ENCODE measurements at regions of chr2 and their contacts with region 1.

Region 1: DNA sequence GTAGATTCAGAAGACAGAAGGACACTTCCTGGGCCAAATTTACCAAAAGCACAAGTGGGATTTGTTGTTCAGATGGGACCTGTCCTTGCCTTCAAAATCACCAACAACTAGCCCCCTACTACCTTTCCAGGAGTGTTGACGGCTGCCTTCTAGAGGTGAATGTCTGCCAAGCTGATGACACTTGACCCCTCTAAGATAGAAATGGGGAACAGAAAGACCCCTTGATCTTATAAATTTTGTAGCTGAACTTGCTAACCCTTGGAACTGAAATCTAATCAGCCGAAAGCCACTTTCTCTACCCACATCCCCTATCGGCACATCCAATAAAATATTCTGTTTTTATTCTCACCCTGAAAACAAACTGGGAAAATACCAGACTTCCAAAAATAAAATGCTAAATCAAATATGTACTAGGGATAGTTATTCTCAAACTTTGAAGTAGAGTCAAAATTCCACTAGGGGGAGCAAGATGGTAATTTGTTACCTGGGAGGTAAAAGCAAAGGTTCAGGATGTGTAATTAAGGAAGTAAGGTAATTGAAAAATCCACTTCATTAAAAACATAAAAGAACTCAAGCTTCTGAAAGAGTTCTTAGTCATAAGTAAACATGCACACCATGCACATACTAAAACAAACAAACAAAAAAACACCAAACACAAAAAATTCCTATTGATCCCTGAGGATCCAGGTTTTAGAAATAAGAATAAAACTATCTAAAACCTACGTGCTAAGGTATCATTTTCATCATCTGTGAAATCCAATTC is 119.2 kb downstream of the ANKRD44 start:
- DNase-seq: no peak
- ATAC-seq: peak; percentile 40
- H3K4me3 Mint-ChIP-seq: peak overlapping the region; percentile 41
- H3K27ac Mint-ChIP-seq: peak overlapping the region; percentile 78
- H3K4me1 Mint-ChIP-seq: peaks cover 76% of the 10 kb centered on the region
- H3K27me3 Mint-ChIP-seq: no peaks in the 10 kb centered on the region
- CTCF ChIP-seq: peak; percentile 84

Region 2: DNA sequence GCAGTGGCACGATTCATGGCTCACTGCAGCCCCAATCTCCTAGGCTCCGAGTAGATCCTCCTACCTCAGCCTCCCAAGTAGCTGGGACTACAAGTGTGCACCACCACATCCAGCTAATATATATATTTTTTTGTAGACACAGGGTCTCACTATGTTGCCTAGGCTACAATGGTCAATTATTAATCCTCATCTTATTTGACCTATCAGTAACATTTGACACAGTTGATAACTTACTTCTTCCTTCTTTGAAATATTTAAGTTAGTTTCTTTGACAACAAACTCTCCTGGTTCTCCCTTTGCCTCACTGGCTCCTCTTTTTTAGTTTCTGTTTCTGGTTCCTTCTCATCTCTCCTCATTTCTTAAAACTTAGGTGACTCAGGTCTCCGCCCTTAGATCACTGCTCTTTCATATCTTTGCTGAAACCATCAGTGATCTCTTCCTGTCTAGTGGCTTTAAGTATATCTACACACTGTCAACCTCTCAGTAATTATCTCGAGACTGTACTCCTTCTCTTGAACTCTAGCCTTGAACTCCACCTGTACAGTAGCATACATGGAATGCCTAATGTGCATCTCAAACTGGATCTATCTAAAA is 276.4 kb before region 1 on chr2:
- CTCF ChIA-PET with region 1: no interaction called
- POLR2A ChIA-PET with region 1: no interaction called
- intact Hi-C with region 1: no loop called
- DNase-seq: peak; percentile 41
- ATAC-seq: peak; percentile 99
- H3K4me3 Mint-ChIP-seq: peak overlapping the region; percentile 18
- H3K27ac Mint-ChIP-seq: peak overlapping the region; percentile 92
- H3K4me1 Mint-ChIP-seq: peaks cover 29% of the 10 kb centered on the region
- H3K27me3 Mint-ChIP-seq: no peaks in the 10 kb centered on the region
- CTCF ChIP-seq: no peak

Region 3: DNA sequence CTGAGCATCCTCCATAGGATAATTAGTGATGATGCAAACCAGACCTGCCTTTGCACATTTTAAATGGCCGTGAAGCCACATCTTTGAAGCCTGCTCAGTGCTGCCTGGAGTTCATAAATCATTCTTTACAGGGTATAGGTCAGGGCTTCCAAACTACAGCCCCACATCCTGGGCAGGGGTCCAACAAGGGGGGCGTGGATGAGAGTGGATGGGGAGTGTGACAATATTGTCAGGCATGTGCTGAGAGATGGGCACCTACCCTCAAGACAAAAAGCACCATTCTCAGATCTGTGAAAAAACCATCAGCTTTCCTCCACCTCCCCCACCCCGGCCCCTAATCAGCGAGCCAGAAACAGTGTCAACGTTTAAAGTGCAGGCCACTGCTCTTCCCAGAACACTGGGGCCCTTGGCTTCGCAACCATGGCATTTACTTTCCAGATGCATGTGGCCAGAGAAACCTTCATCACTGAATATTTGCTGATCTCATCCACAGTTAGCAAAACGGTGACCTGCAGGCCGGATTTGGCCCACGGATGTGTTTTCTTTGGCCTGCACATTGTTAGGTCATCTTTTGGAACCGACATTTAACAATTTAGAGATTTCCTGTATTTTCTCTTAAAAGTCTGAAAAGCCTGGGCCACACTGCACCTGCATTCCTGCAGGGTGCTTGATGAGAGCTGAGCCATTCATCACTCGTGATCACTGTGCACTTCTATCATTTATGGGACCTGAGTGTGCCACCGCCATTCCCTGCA is 11.4 kb before region 1 on chr2:
- CTCF ChIA-PET with region 1: interaction called, 31 read pairs
- POLR2A ChIA-PET with region 1: interaction called, 3 read pairs
- intact Hi-C with region 1: no loop called
- DNase-seq: no peak
- ATAC-seq: no peak
- H3K4me3 Mint-ChIP-seq: no peak overlapping the region
- H3K27ac Mint-ChIP-seq: peak overlapping the region; percentile 26
- H3K4me1 Mint-ChIP-seq: peaks cover 67% of the 10 kb centered on the region
- H3K27me3 Mint-ChIP-seq: no peaks in the 10 kb centered on the region
- CTCF ChIP-seq: no peak

Region 4: DNA sequence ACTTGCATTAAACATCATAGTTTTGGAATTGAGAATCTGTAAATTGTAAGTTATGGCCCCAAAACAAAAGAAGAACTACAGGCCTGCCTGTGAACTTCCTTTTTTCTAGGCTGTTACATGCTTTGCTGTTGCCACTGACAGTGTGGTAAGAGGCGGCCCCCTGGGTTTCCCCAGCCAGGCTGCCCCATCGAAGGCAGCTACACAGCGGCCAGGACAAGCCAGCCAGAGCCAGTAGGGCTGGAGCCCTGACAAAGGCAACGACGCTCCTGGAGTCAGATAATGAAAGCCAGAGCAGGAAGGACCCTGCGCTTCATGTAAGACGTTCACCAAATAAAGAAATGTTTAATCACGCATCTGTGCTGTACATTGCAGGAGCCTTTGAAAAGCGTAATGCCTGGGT is 64.2 kb after region 1 on chr2:
- CTCF ChIA-PET with region 1: interaction called, 13 read pairs
- POLR2A ChIA-PET with region 1: no interaction called
- intact Hi-C with region 1: no loop called
- DNase-seq: peak; percentile 94
- ATAC-seq: peak; percentile 91
- H3K4me3 Mint-ChIP-seq: peak overlapping the region; percentile 76
- H3K27ac Mint-ChIP-seq: peak overlapping the region; percentile 92
- H3K4me1 Mint-ChIP-seq: peaks cover 78% of the 10 kb centered on the region
- H3K27me3 Mint-ChIP-seq: no peaks in the 10 kb centered on the region
- CTCF ChIP-seq: no peak

Region 5: DNA sequence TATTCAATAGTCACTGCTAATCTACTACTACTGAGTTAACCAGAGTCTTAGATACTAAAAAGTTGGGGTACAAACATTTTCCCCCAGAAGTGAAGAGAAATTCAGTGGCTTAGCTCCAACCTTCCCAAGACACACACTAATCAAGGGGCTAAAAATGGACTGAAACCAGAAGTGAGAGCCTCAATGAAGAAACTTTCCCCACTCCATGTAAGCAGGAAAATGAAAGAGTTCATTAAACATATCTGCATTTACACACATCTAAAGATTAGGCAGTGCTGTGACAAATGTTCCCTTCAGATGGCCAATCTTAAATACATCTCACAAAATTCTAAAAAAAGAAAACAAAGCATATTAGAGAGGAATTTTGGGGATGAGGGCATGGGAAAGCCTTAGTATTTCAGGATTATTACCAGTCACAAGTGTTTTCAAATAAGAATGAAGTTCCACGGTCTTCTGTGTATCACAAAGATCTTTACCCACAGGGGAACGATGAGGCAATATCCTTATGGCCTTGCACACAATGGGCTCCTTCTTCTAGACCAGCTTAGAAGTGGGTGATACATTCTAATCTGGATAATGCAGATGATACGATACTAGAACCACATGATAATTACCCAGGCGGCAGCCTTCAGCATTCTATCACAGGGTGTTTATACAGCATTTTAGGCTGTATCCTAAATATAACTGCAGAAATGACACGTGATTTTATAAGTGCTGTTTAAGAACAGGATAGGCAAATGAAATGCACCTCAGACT is 102.1 kb after region 1 on chr2:
- CTCF ChIA-PET with region 1: interaction called, 10 read pairs
- POLR2A ChIA-PET with region 1: interaction called, 3 read pairs
- intact Hi-C with region 1: no loop called
- DNase-seq: peak; percentile 69
- ATAC-seq: peak; percentile 73
- H3K4me3 Mint-ChIP-seq: peak overlapping the region; percentile 81
- H3K27ac Mint-ChIP-seq: peak overlapping the region; percentile 95
- H3K4me1 Mint-ChIP-seq: peaks cover 86% of the 10 kb centered on the region
- H3K27me3 Mint-ChIP-seq: no peaks in the 10 kb centered on the region
- CTCF ChIP-seq: no peak

Region 6: GRCh38 chr2:197378494-197379307 is 187.3 kb after region 1 on chr2:
- CTCF ChIA-PET with region 1: interaction called, 16 read pairs
- POLR2A ChIA-PET with region 1: no interaction called
- intact Hi-C with region 1: loop called (anchors 2 kb)
- DNase-seq: peak; percentile 71
- ATAC-seq: peak; percentile 86
- H3K4me3 Mint-ChIP-seq: no peak overlapping the region
- H3K27ac Mint-ChIP-seq: no peak overlapping the region
- H3K4me1 Mint-ChIP-seq: peaks cover 24% of the 10 kb centered on the region
- H3K27me3 Mint-ChIP-seq: no peaks in the 10 kb centered on the region
- CTCF ChIP-seq: peak; percentile 92